ENCODE measurements at regions of chr19 and their contacts with region 1.

Region 1: DNA sequence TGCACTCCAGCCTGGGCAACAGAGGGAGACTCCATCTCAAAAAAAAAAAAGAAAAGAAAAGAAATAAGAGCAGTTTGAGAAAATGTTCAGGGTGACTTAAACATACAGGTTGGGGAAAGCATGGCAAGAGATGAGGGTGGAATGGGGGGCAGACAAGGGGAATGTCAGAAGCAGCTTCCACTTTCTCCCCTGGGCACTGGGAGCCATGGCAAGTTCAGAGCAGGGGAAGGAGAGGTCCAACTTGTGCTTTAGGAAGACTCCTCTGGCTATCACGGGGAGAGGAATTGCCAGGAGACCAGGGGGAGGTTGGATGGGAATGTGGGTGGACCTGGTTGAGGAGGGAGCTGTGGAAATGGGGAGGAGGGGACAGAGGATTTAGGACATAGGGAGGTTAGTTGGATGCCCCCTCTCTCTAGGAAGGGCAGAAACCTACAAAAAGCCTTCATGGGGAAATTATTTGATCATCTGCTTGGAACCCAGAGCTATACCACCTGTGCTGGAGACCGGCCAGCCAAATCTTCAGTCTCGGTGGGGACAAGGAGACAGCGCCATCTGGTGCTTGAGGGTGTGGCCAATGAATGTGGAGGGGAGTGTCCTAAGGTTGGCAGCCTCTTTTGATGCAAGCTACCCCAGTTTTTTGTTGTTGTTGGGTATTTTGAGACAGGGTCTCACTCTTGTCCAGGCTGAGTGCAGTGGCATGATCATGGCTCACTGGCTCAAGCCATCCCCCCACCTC is 7.3 kb upstream of the STRN4 start:
- DNase-seq: peak; percentile 88
- H3K4me3 Mint-ChIP-seq: no peak overlapping the region
- H3K27ac Mint-ChIP-seq: no peak overlapping the region
- H3K4me1 Mint-ChIP-seq: peaks cover 5% of the 10 kb centered on the region
- H3K27me3 Mint-ChIP-seq: no peaks in the 10 kb centered on the region

Region 2: GRCh38 chr19:46766569-46767317 is 13.2 kb after region 1 on chr19:
- CTCF ChIA-PET with region 1: interaction called, 40 read pairs
- intact Hi-C with region 1: no loop called
- DNase-seq: peak; percentile 74
- H3K4me3 Mint-ChIP-seq: no peak overlapping the region
- H3K27ac Mint-ChIP-seq: no peak overlapping the region
- H3K4me1 Mint-ChIP-seq: peaks cover 2% of the 10 kb centered on the region
- H3K27me3 Mint-ChIP-seq: no peaks in the 10 kb centered on the region

Region 3: GRCh38 chr19:46990991-46991676 is 237.5 kb after region 1 on chr19:
- CTCF ChIA-PET with region 1: interaction called, 5 read pairs
- intact Hi-C with region 1: loop called (anchors 2 kb)
- DNase-seq: peak; percentile 78
- H3K4me3 Mint-ChIP-seq: no peak overlapping the region
- H3K27ac Mint-ChIP-seq: no peak overlapping the region
- H3K4me1 Mint-ChIP-seq: peaks cover 4% of the 10 kb centered on the region
- H3K27me3 Mint-ChIP-seq: no peaks in the 10 kb centered on the region

Measured in activated naive CD4-positive, alpha-beta T cell treated with anti-CD3 and anti-CD28 coated beads for 36 hours (primary cell).